Kidney (tissue), 22 donors: ENCODE measurements at regions of chr5 and their contacts with region 1.

Region 1: GRCh38 chr5:160199410-160199911 is 29.8 kb upstream of the FABP6 start:
- DNase-seq: peak; percentile 72 to 88 (median 81)
- H3K4me3 ChIP-seq: peak overlapping the region; percentile 60 to 72 (median 65)
- H3K27ac ChIP-seq: no peak overlapping the region
- H3K4me1 ChIP-seq: peaks cover 0 to 7% (median 0%) of the 10 kb centered on the region in 3 donors
- H3K27me3 ChIP-seq: no peaks in the 10 kb centered on the region
- CTCF ChIP-seq: peak; percentile 89

Region 2: DNA sequence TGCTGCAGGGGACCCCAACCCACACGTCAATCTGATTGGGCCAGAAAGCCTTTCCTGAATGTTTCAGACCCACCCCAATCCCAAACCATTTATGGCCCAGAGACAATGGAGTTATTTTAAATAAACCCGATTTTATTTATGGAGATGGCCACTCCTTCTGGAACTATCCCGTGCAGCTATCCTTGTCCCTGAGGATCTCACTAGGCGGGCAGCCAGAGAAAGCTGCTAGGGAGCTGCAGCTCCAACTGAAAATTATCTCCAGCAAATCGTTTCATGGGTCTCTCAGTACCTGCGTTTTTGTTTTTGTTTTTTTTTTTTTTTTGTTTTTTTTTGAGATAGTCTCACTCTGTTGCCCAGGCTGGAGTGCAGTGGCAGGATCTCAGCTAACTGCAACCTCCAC is 148.0 kb after region 1 on chr5:
- intact Hi-C with region 1: loop called (anchors 5 kb)
- DNase-seq: no peak
- H3K4me3 ChIP-seq: no peak overlapping the region
- H3K27ac ChIP-seq: no peak overlapping the region
- H3K4me1 ChIP-seq: peaks cover 0 to 3% (median 0%) of the 10 kb centered on the region in 3 donors
- H3K27me3 ChIP-seq: no peaks in the 10 kb centered on the region
- CTCF ChIP-seq: no peak